Dendritic cell treated with granulocyte-macrophage colony-stimulating factor and Interleukin-4, amounts not matched to agents 40 ng/mL and 50 ng/mL, for 4 days (primary cell): ENCODE measurements at regions of chr21 and their contacts with region 1.

Region 1: GRCh38 chr21:15592271-15592860 is 137.4 kb upstream of the USP25 start:
- H3K4me3 Mint-ChIP-seq: no peak overlapping the region
- H3K27ac Mint-ChIP-seq: no peak overlapping the region
- H3K4me1 Mint-ChIP-seq: no peaks in the 10 kb centered on the region
- H3K27me3 Mint-ChIP-seq: no peaks in the 10 kb centered on the region

Region 2: GRCh38 chr21:14259747-14260146 is 1332.6 kb before region 1 on chr21:
- intact Hi-C with region 1: loop called (anchors 1 kb)
- H3K4me3 Mint-ChIP-seq: no peak overlapping the region
- H3K27ac Mint-ChIP-seq: no peak overlapping the region
- H3K4me1 Mint-ChIP-seq: no peaks in the 10 kb centered on the region
- H3K27me3 Mint-ChIP-seq: no peaks in the 10 kb centered on the region

Region 3: DNA sequence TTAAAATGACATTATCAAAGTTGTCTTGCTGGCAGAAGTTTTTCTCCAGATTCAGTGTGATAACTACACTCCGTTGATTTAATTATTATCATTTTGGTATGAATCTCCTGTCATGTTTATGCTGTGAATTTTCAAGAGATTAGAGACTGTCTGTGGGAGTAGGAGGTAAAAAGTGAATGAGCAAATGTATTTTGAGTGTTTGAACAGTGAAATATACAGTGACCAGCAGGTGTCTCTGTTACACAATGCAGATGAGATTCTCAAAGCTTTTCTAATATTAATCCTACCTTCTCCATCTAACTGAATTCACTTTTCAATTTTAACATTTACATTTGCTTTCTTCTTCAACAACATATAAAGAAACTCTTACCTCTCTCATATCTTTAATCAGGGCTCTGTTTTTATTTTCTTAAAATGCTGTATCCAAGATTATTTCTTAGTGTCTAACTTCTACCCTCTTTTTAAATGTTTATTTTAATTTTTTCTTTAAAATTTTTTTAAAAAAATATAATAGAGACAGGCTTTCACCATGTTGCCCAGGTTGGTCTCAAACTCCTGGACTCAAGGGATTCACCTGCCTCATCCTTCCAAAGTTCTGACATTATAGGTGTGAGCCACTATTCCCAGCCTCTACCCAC is 1188.6 kb before region 1 on chr21:
- intact Hi-C with region 1: loop called (anchors 2 kb)
- H3K4me3 Mint-ChIP-seq: no peak overlapping the region
- H3K27ac Mint-ChIP-seq: no peak overlapping the region
- H3K4me1 Mint-ChIP-seq: no peaks in the 10 kb centered on the region
- H3K27me3 Mint-ChIP-seq: no peaks in the 10 kb centered on the region

Region 4: GRCh38 chr21:15319727-15320126 is 272.6 kb before region 1 on chr21:
- intact Hi-C with region 1: no loop called
- H3K4me3 Mint-ChIP-seq: no peak overlapping the region
- H3K27ac Mint-ChIP-seq: no peak overlapping the region
- H3K4me1 Mint-ChIP-seq: no peaks in the 10 kb centered on the region
- H3K27me3 Mint-ChIP-seq: no peaks in the 10 kb centered on the region